Left colon (tissue), 2 donors: ENCODE measurements at regions of chr12 and their contacts with region 1.

Region 1: GRCh38 chr12:104263580-104264358 is 39.8 kb upstream of the EID3 start:
- DNase-seq: no peak
- ATAC-seq: no peak

Region 2: GRCh38 chr12:104226672-104227071 is 37.1 kb before region 1 on chr12:
- intact Hi-C with region 1: loop called in 1 of 2 experiments (anchors 5 kb)
- DNase-seq: no peak
- ATAC-seq: no peak